Activated naive CD4-positive, alpha-beta T cell treated with anti-CD3 and anti-CD28 coated beads for 36 hours (primary cell): ENCODE measurements at regions of chr2 and their contacts with region 1.

Region 1: GRCh38 chr2:54052825-54053718 is 62.3 kb upstream of the ACYP2 start:
- DNase-seq: no peak
- H3K4me3 Mint-ChIP-seq: no peak overlapping the region
- H3K27ac Mint-ChIP-seq: peak overlapping the region; percentile 28
- H3K4me1 Mint-ChIP-seq: peaks cover 27% of the 10 kb centered on the region
- H3K27me3 Mint-ChIP-seq: no peaks in the 10 kb centered on the region

Region 2: GRCh38 chr2:53767405-53768241 is 285.4 kb before region 1 on chr2 and contains the start of gene CHAC2:
- CTCF ChIA-PET with region 1: no interaction called
- intact Hi-C with region 1: loop called (anchors 5 kb)
- DNase-seq: peak; percentile 91
- H3K4me3 Mint-ChIP-seq: peak within 1 kb of the TSS; percentile 94
- H3K27ac Mint-ChIP-seq: peak within 1 kb of the TSS; percentile 93
- H3K4me1 Mint-ChIP-seq: peaks cover 26% of the 10 kb centered on the region
- H3K27me3 Mint-ChIP-seq: no peaks in the 10 kb centered on the region
- total RNA-seq, gene CHAC2: 11.5 to 12.4 TPM

Region 3: DNA sequence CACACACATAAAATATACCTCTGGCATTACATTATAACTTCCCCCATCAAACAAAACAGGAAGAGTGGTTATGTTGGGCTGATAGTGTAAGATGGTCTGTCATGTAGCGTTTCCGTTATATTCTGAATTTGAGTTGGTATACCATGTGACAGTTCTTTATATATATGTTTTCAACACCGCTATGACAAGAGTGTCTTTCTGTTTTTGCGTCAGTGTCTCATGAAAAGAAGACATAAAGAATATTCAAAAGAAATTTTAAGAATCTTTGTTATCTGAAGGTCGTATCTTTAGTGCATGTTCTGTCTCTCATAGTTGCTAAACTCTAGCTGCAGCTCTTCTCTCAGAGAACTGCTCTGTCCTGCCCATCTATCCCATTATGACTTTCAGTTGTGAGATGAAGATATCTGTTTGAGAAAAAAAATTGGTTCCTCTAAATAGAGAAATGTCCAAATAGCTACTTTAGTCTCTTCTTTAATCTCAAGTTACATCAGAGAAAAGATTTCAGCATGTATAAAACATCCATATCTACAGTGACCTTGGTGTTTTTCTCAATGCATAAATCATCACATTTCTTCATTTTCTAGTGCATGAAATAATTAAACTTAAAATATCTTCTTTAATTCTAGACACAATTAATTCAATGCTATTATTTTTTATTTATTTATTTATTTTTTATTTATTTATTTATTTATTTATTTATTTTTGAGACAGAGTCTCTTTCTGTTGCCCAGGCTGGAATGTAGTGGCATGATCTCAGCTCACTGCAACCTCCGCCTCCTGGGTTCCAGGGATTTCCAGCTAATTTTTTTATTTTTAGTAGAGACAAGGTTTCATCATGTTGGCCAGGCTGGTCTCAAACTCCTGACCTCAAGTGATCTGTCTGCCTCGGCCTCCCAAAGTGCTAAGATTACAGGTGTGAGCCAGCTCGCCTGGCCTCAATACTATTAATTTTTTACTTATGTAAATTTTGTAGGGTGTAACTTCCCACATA is 58.0 kb before region 1 on chr2:
- CTCF ChIA-PET with region 1: no interaction called
- intact Hi-C with region 1: loop called (anchors 2 kb)
- DNase-seq: no peak
- H3K4me3 Mint-ChIP-seq: peak overlapping the region; percentile 64
- H3K27ac Mint-ChIP-seq: peak overlapping the region; percentile 85
- H3K4me1 Mint-ChIP-seq: peaks cover 28% of the 10 kb centered on the region
- H3K27me3 Mint-ChIP-seq: no peaks in the 10 kb centered on the region

Region 4: DNA sequence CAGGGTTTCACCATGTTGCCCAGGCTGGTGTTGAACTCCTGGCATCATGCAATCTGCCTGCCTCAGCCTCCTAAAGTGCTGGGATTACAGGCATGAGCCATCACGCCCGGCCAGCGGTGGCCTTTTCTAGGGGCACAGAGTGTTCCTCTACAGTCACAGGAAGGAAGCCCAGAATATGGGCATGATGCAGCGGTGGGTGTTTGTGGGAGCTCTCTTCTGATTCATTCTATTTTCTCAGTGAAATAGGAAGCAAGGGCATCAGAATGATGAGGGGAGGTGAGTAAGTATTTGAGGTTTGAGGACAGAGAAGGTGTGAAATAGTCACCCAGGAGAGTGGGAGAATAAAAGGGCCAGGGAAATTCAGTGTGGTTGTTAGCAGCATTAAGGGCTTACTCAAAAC is 11.9 kb before region 1 on chr2:
- CTCF ChIA-PET with region 1: no interaction called
- intact Hi-C with region 1: loop called (anchors 2 kb)
- DNase-seq: peak; percentile 73
- H3K4me3 Mint-ChIP-seq: no peak overlapping the region
- H3K27ac Mint-ChIP-seq: no peak overlapping the region
- H3K4me1 Mint-ChIP-seq: no peaks in the 10 kb centered on the region
- H3K27me3 Mint-ChIP-seq: no peaks in the 10 kb centered on the region

Region 5: DNA sequence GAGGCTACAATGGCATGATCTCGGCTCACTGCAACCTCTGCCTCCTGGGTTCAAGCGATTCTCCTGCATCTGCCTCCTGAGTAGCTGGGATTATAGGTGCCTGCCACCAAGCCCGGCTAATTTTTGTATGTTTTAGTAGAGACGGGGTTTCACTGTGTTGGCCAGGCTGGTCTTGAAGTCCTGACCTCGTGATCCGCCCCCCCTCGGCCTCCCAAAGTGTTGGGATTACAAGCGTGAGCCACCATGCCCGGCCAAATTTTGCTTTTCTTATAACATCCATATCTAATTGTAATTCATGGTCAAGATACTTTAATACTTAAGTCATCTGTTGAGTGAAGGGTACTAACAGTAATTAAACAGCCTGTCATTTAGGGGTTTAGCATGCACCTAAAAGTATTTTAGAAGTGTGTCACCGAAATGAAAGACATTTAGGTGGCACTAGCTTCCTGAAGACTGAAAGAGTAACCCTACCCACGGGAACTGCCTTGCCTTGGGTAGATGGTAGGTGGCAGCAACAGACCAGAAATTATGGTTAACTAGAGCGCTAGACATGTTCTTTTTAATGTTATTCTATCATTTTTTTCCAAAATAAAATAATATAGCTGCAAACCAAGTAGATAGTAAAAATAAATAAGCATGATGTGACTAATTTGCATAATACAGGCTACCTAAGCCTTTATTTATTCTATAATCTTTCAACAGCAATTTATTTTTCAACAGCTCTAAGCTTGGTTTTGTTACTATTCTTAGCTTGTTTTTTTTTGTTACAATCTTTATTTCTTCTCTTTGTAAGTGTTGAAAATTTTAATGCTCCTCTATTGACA is 53.8 kb after region 1 on chr2:
- CTCF ChIA-PET with region 1: interaction called, 8 read pairs
- intact Hi-C with region 1: loop called (anchors 5 kb)
- DNase-seq: peak; percentile 71
- H3K4me3 Mint-ChIP-seq: no peak overlapping the region
- H3K27ac Mint-ChIP-seq: no peak overlapping the region
- H3K4me1 Mint-ChIP-seq: peaks cover 7% of the 10 kb centered on the region
- H3K27me3 Mint-ChIP-seq: no peaks in the 10 kb centered on the region

Region 6: GRCh38 chr2:54330162-54330925 is 277.3 kb after region 1 on chr2:
- CTCF ChIA-PET with region 1: no interaction called
- intact Hi-C with region 1: loop called (anchors 5 kb)
- DNase-seq: peak; percentile 93
- H3K4me3 Mint-ChIP-seq: peak overlapping the region; percentile 83
- H3K27ac Mint-ChIP-seq: no peak overlapping the region
- H3K4me1 Mint-ChIP-seq: peaks cover 17% of the 10 kb centered on the region
- H3K27me3 Mint-ChIP-seq: peaks cover 6% of the 10 kb centered on the region